CD8-positive, alpha-beta T cell (primary cell): ENCODE measurements at regions of chr1 and their contacts with region 1.

Region 1: GRCh38 chr1:248837794-248838356 is at the start of gene ZNF672:
- DNase-seq: peak; percentile 84 to 96 (median 94)
- ATAC-seq: peak; percentile 87
- H3K4me3 ChIP-seq: peak within 1 kb of the TSS; percentile 61 to 80
- H3K4me3 Mint-ChIP-seq: no peak within 1 kb of the TSS
- H3K27ac ChIP-seq: peak within 1 kb of the TSS; percentile 99
- H3K27ac Mint-ChIP-seq: peak within 1 kb of the TSS; percentile 99
- H3K4me1 ChIP-seq: peaks cover 24% of the 10 kb centered on the region
- H3K4me1 Mint-ChIP-seq: peaks cover 33% of the 10 kb centered on the region
- H3K27me3 ChIP-seq: peaks cover 0 to 4% of the 10 kb centered on the region in 2 experiments
- H3K27me3 Mint-ChIP-seq: peaks cover 2% of the 10 kb centered on the region
- CTCF ChIP-seq: no peak
- total RNA-seq, gene ZNF672: 33.8 to 33.9 TPM

Region 2: DNA sequence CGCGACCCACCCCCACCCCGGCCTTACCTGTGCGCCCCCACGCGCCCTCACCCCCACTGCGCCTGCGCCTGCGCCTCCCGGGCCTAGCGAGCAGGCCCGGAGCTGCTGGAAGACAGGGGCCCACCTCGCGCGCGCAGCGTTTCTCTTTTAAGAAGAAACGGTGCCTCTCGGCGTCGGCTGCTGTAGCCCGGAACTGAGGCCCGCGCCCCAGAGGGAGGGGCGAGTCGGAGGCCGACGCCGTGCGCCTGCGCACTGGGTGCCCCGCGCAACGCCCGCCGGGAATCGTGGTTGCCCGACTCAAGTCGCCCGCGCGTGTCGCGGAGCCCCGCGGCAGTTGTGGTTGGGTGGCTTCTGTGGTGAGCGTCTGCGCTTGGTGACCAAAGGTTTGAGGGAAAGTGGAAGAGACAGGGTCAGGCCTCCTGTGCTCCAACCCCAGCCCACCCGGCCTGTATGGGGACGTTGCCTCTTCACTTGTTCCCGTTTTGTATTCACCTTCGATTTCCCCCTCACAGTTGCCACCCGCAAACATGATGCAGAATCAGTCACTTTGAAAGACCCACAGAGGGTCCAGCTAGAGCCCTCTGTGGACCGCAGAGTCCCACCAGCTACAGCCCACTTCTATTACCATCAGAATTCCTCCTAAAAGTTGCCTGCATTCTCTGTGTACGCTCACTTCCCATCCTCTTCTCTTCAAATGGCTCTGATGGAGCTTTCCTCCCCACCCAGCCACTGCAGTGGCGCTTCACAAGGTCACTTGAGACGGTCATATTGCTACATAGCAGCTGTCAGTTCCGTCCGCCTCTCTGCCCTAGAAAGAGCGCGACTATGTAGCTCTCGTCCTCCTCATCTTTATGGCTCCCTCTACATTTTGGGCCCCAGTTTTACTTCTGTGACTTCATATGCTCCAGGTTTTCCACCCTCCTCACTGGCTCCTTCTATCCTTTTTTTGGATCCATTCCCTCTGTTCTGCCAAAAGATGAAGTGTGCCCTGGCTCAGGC is 21.3 kb after region 1 on chr1 and contains the start of gene ZNF692:
- CTCF ChIA-PET with region 1: interaction called, 24 read pairs
- POLR2A ChIA-PET with region 1: interaction called, 95 read pairs
- intact Hi-C with region 1: loop called (anchors 1 kb)
- DNase-seq: peak; percentile 92 to 98 (median 96)
- ATAC-seq: peak; percentile 83
- H3K4me3 ChIP-seq: peak within 1 kb of the TSS; percentile 60 to 72
- H3K4me3 Mint-ChIP-seq: peak within 1 kb of the TSS; percentile 82
- H3K27ac ChIP-seq: peak within 1 kb of the TSS; percentile 75 to 82
- H3K27ac Mint-ChIP-seq: peak within 1 kb of the TSS; percentile 97
- H3K4me1 ChIP-seq: peaks cover 50% of the 10 kb centered on the region
- H3K4me1 Mint-ChIP-seq: peaks cover 54% of the 10 kb centered on the region
- H3K27me3 ChIP-seq: no peaks in the 10 kb centered on the region
- H3K27me3 Mint-ChIP-seq: no peaks in the 10 kb centered on the region
- CTCF ChIP-seq: no peak
- total RNA-seq, gene ZNF692: 18.7 to 19.2 TPM

Region 3: DNA sequence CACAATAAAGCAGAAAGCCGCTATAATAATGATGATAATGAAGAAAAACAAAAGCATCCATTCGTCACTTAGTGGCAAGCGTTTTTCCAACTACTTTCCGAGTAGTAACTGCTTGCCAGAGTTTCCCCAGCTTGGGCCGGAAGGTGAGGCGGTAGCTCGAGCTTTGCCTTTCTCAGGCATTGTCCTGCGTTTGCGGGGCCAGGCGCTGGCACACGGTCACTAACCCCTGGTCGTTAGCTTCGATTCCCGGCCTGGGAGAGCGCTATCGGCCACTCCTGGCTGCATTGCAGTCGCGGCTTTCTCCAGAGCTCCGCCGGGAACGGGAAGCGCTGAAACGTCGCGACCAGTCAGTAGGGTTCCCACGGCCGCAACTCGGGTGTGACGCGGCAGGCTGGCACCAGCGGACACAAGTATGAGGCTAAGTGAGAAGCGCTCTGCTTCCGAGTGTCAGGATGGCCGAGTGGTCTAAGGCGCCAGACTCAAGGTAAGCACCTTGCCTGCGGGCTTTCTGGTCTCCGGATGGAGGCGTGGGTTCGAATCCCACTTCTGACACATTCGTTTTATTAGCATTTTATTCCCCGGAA is 35.6 kb after region 1 on chr1:
- CTCF ChIA-PET with region 1: no interaction called
- POLR2A ChIA-PET with region 1: interaction called, 12 read pairs
- intact Hi-C with region 1: loop called in 1 of 2 experiments (anchors 1 kb)
- DNase-seq: peak; percentile 88 to 95 (median 92)
- ATAC-seq: peak; percentile 77
- H3K4me3 ChIP-seq: peak overlapping the region; percentile 78 to 87
- H3K4me3 Mint-ChIP-seq: peak overlapping the region; percentile 98
- H3K27ac ChIP-seq: peak overlapping the region; percentile 74 to 85
- H3K27ac Mint-ChIP-seq: peak overlapping the region; percentile 98
- H3K4me1 ChIP-seq: peaks cover 8% of the 10 kb centered on the region
- H3K4me1 Mint-ChIP-seq: peaks cover 24% of the 10 kb centered on the region
- H3K27me3 ChIP-seq: no peaks in the 10 kb centered on the region
- H3K27me3 Mint-ChIP-seq: no peaks in the 10 kb centered on the region
- CTCF ChIP-seq: no peak